ENCODE measurements at regions of chr19 and their contacts with region 1.

Region 1: DNA sequence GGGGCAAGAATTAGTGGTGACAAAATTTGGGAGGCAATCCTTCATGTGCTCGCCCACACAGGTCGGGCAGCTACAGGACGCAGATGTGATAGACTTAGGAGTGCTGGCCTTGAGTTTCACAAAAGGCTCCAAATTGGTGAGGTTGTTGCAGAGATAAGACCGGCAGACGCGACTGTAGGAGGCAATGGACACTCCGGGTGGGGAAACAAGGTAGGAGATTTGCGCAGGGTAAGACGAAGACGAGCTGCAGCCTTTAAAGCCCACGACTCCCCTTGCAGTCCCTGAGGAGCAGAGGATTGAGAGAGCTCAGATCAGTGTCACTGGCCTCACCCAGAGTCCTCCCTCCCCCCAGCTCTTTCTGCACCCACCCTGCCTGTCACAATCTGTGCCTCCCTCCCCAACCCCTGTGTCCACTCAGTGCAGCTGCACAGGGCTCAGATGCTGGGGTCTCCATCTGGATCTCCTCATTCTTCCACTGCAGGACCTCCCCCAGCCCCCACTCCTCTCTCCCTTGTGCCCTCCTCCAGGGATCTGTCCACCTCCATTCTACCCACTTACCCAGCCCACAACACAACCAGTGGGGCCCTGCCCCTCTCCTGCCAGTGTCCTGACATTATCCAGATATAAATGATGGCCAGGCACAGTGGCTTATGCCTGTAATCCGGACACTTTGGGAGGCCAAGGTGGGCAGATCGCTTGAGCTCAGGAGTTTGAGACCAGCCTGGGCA is 6.3 kb downstream of the LYPD4 start:
- DNase-seq: no peak
- ATAC-seq: no peak
- H3K4me3 ChIP-seq: no peak overlapping the region
- H3K4me3 Mint-ChIP-seq: no peak overlapping the region
- H3K27ac ChIP-seq: no peak overlapping the region
- H3K27ac Mint-ChIP-seq: no peak overlapping the region
- H3K4me1 ChIP-seq: no peaks in the 10 kb centered on the region
- H3K4me1 Mint-ChIP-seq: no peaks in the 10 kb centered on the region
- H3K27me3 ChIP-seq: peaks cover 0 to 3% of the 10 kb centered on the region in 2 experiments
- H3K27me3 Mint-ChIP-seq: peaks cover 26% of the 10 kb centered on the region
- CTCF ChIP-seq: no peak

Region 2: GRCh38 chr19:41821003-41821735 is 17.0 kb before region 1 on chr19:
- CTCF ChIA-PET with region 1: interaction called, 28 read pairs
- POLR2A ChIA-PET with region 1: no interaction called
- intact Hi-C with region 1: no loop called
- DNase-seq: peak in 8 of 9 experiments; percentile 6 to 69 (median 44)
- ATAC-seq: peak; percentile 82
- H3K4me3 ChIP-seq: no peak overlapping the region
- H3K4me3 Mint-ChIP-seq: no peak overlapping the region
- H3K27ac ChIP-seq: no peak overlapping the region
- H3K27ac Mint-ChIP-seq: no peak overlapping the region
- H3K4me1 ChIP-seq: no peaks in the 10 kb centered on the region
- H3K4me1 Mint-ChIP-seq: no peaks in the 10 kb centered on the region
- H3K27me3 ChIP-seq: peaks cover 0 to 2% of the 10 kb centered on the region in 2 experiments
- H3K27me3 Mint-ChIP-seq: peaks cover 18% of the 10 kb centered on the region
- CTCF ChIP-seq: peak; percentile 42

Measured in CD8-positive, alpha-beta T cell (primary cell).